Activated CD4-positive, alpha-beta memory T cell treated with anti-CD3 and anti-CD28 coated beads for 36 hours (primary cell): ENCODE measurements at regions of chr17 and their contacts with region 1.

Region 1: GRCh38 chr17:4908301-4908700 is 5.4 kb upstream of the CHRNE start:
- DNase-seq: peak; percentile 34
- H3K4me3 Mint-ChIP-seq: no peak overlapping the region
- H3K27ac Mint-ChIP-seq: no peak overlapping the region
- H3K4me1 Mint-ChIP-seq: peaks cover 4% of the 10 kb centered on the region
- H3K27me3 Mint-ChIP-seq: no peaks in the 10 kb centered on the region

Region 2: DNA sequence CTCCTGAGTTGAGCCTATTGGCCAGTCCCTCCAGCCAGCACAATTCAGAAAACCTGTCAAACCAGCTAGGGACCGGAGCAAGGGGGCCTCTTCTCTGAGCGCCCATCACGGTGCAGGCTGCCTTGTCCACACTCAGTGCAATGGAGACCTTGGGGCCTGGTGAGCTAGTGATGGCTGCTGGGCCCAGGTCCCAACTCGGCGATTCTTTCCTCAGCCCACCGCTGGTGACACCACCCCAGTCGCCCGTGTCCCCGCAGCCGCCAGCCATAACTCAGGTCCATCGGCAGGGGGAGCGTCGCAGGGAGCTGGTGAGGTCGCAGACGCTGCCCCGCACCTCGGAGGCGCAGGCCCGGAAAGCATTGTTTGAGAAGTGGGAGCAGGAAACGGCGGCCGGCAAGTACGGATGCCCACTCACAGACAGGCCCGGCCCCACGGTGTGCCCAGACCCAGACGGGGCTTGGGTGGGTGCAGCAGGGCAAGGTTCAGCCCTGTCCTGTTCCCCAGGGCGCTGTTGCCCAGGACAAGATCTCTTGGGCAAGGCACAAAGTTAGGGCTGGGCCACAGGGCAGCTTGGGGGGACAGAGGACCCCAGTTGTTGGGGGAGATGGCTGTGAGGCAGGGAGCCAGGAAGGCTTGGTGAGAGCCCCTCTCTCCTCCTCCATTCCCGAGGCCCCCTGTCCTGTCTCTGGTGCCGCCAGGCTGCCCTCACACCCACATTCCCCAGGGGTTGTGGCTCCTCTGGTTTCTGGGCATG is 313.2 kb before region 1 on chr17:
- CTCF ChIA-PET with region 1: no interaction called
- POLR2A ChIA-PET with region 1: no interaction called
- intact Hi-C with region 1: no loop called
- DNase-seq: peak; percentile 52
- H3K4me3 Mint-ChIP-seq: no peak overlapping the region
- H3K27ac Mint-ChIP-seq: no peak overlapping the region
- H3K4me1 Mint-ChIP-seq: peaks cover 4% of the 10 kb centered on the region
- H3K27me3 Mint-ChIP-seq: peaks cover 8% of the 10 kb centered on the region

Region 3: GRCh38 chr17:4881761-4882555 is 26.3 kb before region 1 on chr17:
- CTCF ChIA-PET with region 1: no interaction called
- POLR2A ChIA-PET with region 1: no interaction called
- intact Hi-C with region 1: no loop called
- DNase-seq: peak; percentile 74
- H3K4me3 Mint-ChIP-seq: no peak overlapping the region
- H3K27ac Mint-ChIP-seq: no peak overlapping the region
- H3K4me1 Mint-ChIP-seq: no peaks in the 10 kb centered on the region
- H3K27me3 Mint-ChIP-seq: no peaks in the 10 kb centered on the region

Region 4: GRCh38 chr17:4986951-4987766 is 78.9 kb after region 1 on chr17 and contains the start of gene CAMTA2:
- CTCF ChIA-PET with region 1: interaction called, 7 read pairs
- POLR2A ChIA-PET with region 1: no interaction called
- intact Hi-C with region 1: loop called (anchors 5 kb)
- DNase-seq: peak; percentile 90
- H3K4me3 Mint-ChIP-seq: peak within 1 kb of the TSS; percentile 91
- H3K27ac Mint-ChIP-seq: peak within 1 kb of the TSS; percentile 94
- H3K4me1 Mint-ChIP-seq: peaks cover 42% of the 10 kb centered on the region
- H3K27me3 Mint-ChIP-seq: no peaks in the 10 kb centered on the region
- total RNA-seq, gene CAMTA2: 101 to 109 TPM

Region 5: GRCh38 chr17:5184288-5184687 is 276.0 kb after region 1 on chr17:
- CTCF ChIA-PET with region 1: no interaction called
- POLR2A ChIA-PET with region 1: no interaction called
- intact Hi-C with region 1: no loop called
- DNase-seq: no peak
- H3K4me3 Mint-ChIP-seq: no peak overlapping the region
- H3K27ac Mint-ChIP-seq: no peak overlapping the region
- H3K4me1 Mint-ChIP-seq: no peaks in the 10 kb centered on the region
- H3K27me3 Mint-ChIP-seq: no peaks in the 10 kb centered on the region